Activated T-helper 2 cell treated with anti-CD3 and anti-CD28 coated beads, Interferon-gamma antibody, Interleukin-2, Interleukin-4, amounts not matched to agents 10 μg/mL and 5 μg/mL and 100 μg/mL, durations not matched to agents 14 hours and 24 hours and 36 hours (primary cell): ENCODE measurements at regions of chr6 and their contacts with region 1.

Region 1: GRCh38 chr6:83067448-83068413 is at the start of gene DOP1A:
- DNase-seq: peak; percentile 92
- H3K4me3 Mint-ChIP-seq: peak within 1 kb of the TSS; percentile 86
- H3K27ac Mint-ChIP-seq: peak within 1 kb of the TSS; percentile 65
- H3K4me1 Mint-ChIP-seq: peaks cover 31% of the 10 kb centered on the region
- H3K27me3 Mint-ChIP-seq: no peaks in the 10 kb centered on the region
- total RNA-seq, gene DOP1A: 6.5 and 7.5 TPM in 2 replicates

Region 2: DNA sequence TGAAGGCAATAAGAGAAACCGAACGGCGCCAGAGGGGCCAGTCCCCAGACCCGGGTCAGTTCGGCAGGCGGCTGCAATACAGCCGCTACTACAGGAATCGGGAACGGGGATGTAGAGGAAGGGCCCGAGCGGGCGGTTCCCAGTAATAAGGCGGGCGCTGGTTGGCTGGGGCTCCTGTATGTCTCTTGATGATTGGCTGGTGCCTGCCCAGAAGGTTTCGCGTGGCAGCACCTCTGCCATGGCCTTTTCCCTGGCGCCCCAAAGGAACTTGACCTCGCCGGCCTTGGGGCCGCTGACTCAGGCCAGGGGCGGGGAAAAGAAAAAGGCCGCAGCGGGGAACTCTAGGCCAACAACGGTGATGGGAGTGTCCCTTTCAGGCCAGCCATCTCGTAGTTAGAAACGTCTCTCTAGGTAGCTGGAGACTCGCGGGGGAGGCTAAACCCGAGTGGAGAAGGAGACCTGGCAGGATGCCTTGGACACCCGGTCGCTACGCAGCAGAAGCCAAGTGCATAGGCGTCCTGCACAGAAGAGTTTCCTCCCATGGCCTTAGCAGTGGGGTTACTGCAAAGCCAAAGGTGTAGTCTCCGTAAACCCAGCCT is 820.0 kb before region 1 on chr6 and contains the start of gene IBTK:
- intact Hi-C with region 1: loop called (anchors 2 kb)
- DNase-seq: peak; percentile 88
- H3K4me3 Mint-ChIP-seq: peak within 1 kb of the TSS; percentile 91
- H3K27ac Mint-ChIP-seq: peak within 1 kb of the TSS; percentile 93
- H3K4me1 Mint-ChIP-seq: peaks cover 31% of the 10 kb centered on the region
- H3K27me3 Mint-ChIP-seq: no peaks in the 10 kb centered on the region
- total RNA-seq, gene IBTK: 40.5 and 42.5 TPM in 2 replicates

Region 3: GRCh38 chr6:82712852-82713251 is 354.9 kb before region 1 on chr6:
- intact Hi-C with region 1: loop called (anchors 10 kb)
- DNase-seq: no peak
- H3K4me3 Mint-ChIP-seq: no peak overlapping the region
- H3K27ac Mint-ChIP-seq: no peak overlapping the region
- H3K4me1 Mint-ChIP-seq: no peaks in the 10 kb centered on the region
- H3K27me3 Mint-ChIP-seq: no peaks in the 10 kb centered on the region

Region 4: GRCh38 chr6:83192871-83193746 is 125.4 kb after region 1 on chr6 and contains the starts of genes PGM3 and RWDD2A:
- intact Hi-C with region 1: loop called (anchors 1 kb)
- DNase-seq: peak; percentile 85
- H3K4me3 Mint-ChIP-seq: peak within 1 kb of the TSS; percentile 90
- H3K27ac Mint-ChIP-seq: peak within 1 kb of the TSS; percentile 89
- H3K4me1 Mint-ChIP-seq: peaks cover 17% of the 10 kb centered on the region
- H3K27me3 Mint-ChIP-seq: peaks cover 6% of the 10 kb centered on the region
- total RNA-seq, gene PGM3: 29.2 and 31.3 TPM in 2 replicates
- total RNA-seq, gene RWDD2A: 1.4 and 1.5 TPM in 2 replicates

Region 5: GRCh38 chr6:83215131-83216047 is 147.7 kb after region 1 on chr6:
- intact Hi-C with region 1: loop called (anchors 1 kb)
- DNase-seq: peak; percentile 24
- H3K4me3 Mint-ChIP-seq: no peak overlapping the region
- H3K27ac Mint-ChIP-seq: no peak overlapping the region
- H3K4me1 Mint-ChIP-seq: no peaks in the 10 kb centered on the region
- H3K27me3 Mint-ChIP-seq: peaks cover 25% of the 10 kb centered on the region

Region 6: GRCh38 chr6:83292900-83293843 is 225.4 kb after region 1 on chr6:
- intact Hi-C with region 1: loop called (anchors 5 kb)
- DNase-seq: no peak
- H3K4me3 Mint-ChIP-seq: no peak overlapping the region
- H3K27ac Mint-ChIP-seq: no peak overlapping the region
- H3K4me1 Mint-ChIP-seq: peaks cover 9% of the 10 kb centered on the region
- H3K27me3 Mint-ChIP-seq: peaks cover 34% of the 10 kb centered on the region

Region 7: DNA sequence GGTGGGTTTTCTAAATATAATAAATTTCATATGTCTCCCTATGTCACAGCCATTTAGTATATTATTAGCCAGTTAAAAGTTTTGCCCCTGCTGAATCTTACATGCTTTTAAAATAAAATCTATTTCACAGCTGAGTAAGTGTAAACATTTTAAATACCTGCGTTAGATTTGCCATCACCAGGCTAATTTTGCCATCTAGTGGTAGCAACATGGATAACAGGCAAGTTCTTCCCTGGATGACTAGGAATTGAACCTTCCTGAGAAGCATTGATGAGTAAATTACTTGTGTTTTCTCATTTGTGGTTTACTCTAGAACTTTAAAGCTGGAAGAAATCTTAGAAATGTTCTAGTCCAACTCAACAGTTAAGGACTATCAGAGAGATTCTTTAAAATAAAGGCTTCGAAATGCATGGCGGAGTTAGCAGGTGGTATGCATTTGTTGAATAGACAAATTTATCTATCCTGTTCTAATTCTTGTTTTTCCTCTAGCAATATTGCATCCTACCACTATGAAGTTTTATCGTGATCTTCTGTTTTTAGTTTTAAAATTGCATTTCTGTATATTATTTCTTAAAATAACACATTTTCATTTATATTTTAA is 447.2 kb after region 1 on chr6:
- intact Hi-C with region 1: loop called (anchors 2 kb)
- DNase-seq: no peak
- H3K4me3 Mint-ChIP-seq: no peak overlapping the region
- H3K27ac Mint-ChIP-seq: no peak overlapping the region
- H3K4me1 Mint-ChIP-seq: peaks cover 6% of the 10 kb centered on the region
- H3K27me3 Mint-ChIP-seq: peaks cover 39% of the 10 kb centered on the region